ENCODE measurements at regions of chr3 and their contacts with region 1.

Region 1: GRCh38 chr3:131794766-131795388 is 239.9 kb downstream of the CPNE4 start:
- DNase-seq: peak in 1 of 2 donors; percentile 3
- ATAC-seq: peak; percentile 72

Region 2: GRCh38 chr3:131669590-131669989 is 125.3 kb before region 1 on chr3:
- intact Hi-C with region 1: no loop called
- DNase-seq: no peak
- ATAC-seq: no peak

Region 3: GRCh38 chr3:132006605-132007204 is 211.8 kb after region 1 on chr3:
- intact Hi-C with region 1: loop called in 1 of 2 experiments (anchors 10 kb)
- DNase-seq: peak in 1 of 2 donors; percentile 10
- ATAC-seq: peak; percentile 48

Measured in left colon (tissue), 2 donors.